Spleen (tissue), 13 donors: ENCODE measurements at regions of chr16 and their contacts with region 1.

Region 1: GRCh38 chr16:13660807-13661206 is 259.1 kb upstream of the ERCC4 start:
- DNase-seq: no peak
- H3K4me3 ChIP-seq: no peak overlapping the region
- H3K27ac ChIP-seq: no peak overlapping the region
- H3K4me1 ChIP-seq: no peaks in the 10 kb centered on the region
- H3K27me3 ChIP-seq: no peaks in the 10 kb centered on the region
- CTCF ChIP-seq: no peak
- POLR2A ChIP-seq: no peak

Region 2: GRCh38 chr16:13718748-13719147 is 57.9 kb after region 1 on chr16:
- intact Hi-C with region 1: loop called (anchors 10 kb)
- DNase-seq: no peak
- H3K4me3 ChIP-seq: no peak overlapping the region
- H3K27ac ChIP-seq: no peak overlapping the region
- H3K4me1 ChIP-seq: no peaks in the 10 kb centered on the region
- H3K27me3 ChIP-seq: no peaks in the 10 kb centered on the region
- CTCF ChIP-seq: no peak
- POLR2A ChIP-seq: no peak